ENCODE measurements at regions of chr11 and their contacts with region 1.

Region 1: GRCh38 chr11:120511116-120511819 is at the start of gene GRIK4:
- DNase-seq: peak; percentile 76 to 87
- ATAC-seq: peak; percentile 90 to 92 (median 92)
- H3K4me3 ChIP-seq: peak within 1 kb of the TSS; percentile 43
- H3K4me3 Mint-ChIP-seq: peak within 1 kb of the TSS; percentile 69
- H3K27ac ChIP-seq: no peak within 1 kb of the TSS
- H3K27ac Mint-ChIP-seq: peak within 1 kb of the TSS in 1 of 2 donors; percentile 61
- H3K4me1 ChIP-seq: peaks cover 6% of the 10 kb centered on the region
- H3K4me1 Mint-ChIP-seq: peaks cover 0 to 28% of the 10 kb centered on the region in 2 donors
- H3K27me3 ChIP-seq: no peaks in the 10 kb centered on the region
- H3K27me3 Mint-ChIP-seq: peaks cover 31 to 64% of the 10 kb centered on the region in 2 donors
- CTCF ChIP-seq: peak; percentile 87
- total RNA-seq, gene GRIK4: 2.2 to 32.3 (median 21.9) TPM

Region 2: DNA sequence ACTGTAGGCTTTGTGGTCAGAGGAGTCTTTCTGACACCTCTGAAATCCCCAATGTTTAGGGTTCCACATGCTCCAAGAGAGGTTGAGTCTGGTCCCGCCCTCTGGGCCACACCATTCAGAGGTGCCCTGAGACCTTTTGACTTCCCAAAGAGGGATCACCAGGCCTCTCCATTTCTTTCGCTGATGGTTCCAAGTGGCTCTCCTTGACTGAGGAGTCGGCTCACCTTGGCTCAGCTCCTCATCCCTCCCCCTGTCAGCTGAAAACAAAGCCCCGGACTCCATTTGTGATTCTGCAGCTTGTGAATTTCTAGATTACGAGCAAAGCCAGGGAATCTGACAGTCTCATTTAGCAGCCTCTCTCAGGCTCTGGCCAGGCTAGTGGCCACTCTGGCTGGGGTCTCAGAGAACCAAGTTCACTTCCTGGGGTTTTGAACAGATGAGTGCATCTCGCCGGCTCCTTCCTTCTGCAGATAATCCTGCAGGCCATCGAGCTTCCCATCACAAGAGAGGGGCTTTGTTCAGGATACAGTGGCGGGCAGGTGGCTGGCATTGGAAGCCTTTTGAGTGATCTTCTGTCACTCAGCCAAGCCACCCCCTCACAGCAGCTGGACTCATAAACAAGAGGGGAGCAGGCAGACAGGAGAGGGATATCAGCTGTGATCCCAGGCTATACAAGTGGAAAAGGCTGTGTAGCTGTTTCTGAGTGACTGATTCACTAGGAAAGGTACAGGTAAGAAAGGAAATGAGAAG is 476.2 kb before region 1 on chr11:
- intact Hi-C with region 1: no loop called
- DNase-seq: no peak
- ATAC-seq: no peak
- H3K4me3 ChIP-seq: no peak overlapping the region
- H3K4me3 Mint-ChIP-seq: no peak overlapping the region
- H3K27ac ChIP-seq: no peak overlapping the region
- H3K27ac Mint-ChIP-seq: no peak overlapping the region
- H3K4me1 ChIP-seq: no peaks in the 10 kb centered on the region
- H3K4me1 Mint-ChIP-seq: no peaks in the 10 kb centered on the region
- H3K27me3 ChIP-seq: no peaks in the 10 kb centered on the region
- H3K27me3 Mint-ChIP-seq: peaks cover 2 to 12% of the 10 kb centered on the region in 2 donors
- CTCF ChIP-seq: no peak

Region 3: DNA sequence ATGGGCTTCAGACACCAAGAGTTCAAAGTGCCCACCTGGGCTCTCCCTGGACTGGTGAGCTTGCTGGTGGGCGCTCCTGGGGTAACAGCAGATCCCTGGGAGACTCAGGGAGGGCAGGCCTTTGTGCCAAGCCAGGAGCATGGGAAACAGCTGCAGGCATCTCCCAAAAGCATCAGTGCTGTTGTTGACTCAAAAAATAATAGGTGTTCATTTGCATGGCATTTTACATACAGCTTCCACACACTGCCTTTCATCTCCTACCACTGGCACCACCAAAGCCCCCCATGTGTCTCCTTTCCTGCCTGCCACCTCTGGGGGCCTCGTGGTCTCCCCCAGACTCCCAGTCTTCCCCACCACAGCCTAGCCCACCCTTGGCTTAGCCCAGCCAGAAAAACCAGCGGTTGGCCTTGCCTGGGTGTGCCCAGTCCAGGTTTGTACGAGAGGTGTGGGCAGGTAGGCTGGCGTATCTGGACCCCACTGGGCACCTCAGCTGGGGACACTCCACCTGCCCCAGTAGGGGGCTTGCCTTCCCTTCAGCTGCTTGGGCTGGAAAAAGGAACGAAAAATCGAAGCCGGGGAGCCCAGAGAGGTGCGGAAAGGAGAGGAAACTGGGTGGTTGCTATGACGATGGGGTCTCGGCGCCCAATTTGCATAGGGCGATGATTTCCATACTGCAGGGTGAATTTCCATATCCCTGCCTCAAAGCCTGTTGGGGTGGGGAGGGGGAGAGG is 256.3 kb before region 1 on chr11:
- intact Hi-C with region 1: no loop called
- DNase-seq: no peak
- ATAC-seq: no peak
- H3K4me3 ChIP-seq: no peak overlapping the region
- H3K4me3 Mint-ChIP-seq: no peak overlapping the region
- H3K27ac ChIP-seq: no peak overlapping the region
- H3K27ac Mint-ChIP-seq: no peak overlapping the region
- H3K4me1 ChIP-seq: no peaks in the 10 kb centered on the region
- H3K4me1 Mint-ChIP-seq: no peaks in the 10 kb centered on the region
- H3K27me3 ChIP-seq: peaks cover 6% of the 10 kb centered on the region
- H3K27me3 Mint-ChIP-seq: peaks cover 31 to 57% of the 10 kb centered on the region in 2 donors
- CTCF ChIP-seq: no peak

Region 4: DNA sequence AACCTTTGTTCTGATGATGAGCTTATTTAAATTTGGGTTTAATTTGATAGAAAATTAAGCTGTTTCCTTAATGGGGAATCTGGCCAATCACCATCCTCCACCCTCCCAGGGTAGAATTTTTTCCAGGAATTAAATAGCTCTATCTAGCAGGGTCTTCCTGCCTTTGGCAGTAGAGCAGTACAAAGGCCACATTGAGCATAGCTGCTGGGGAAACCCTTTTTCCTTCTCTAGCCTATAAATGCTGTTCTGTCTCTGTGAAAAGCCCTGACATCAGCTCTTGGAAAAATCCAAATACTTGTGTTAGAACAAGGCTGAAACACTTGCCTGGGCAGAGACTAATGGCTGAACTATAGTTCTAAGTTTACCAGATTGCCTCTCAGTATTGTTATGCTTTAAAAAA is 120.0 kb before region 1 on chr11:
- intact Hi-C with region 1: no loop called
- DNase-seq: no peak
- ATAC-seq: no peak
- H3K4me3 ChIP-seq: no peak overlapping the region
- H3K4me3 Mint-ChIP-seq: no peak overlapping the region
- H3K27ac ChIP-seq: no peak overlapping the region
- H3K27ac Mint-ChIP-seq: no peak overlapping the region
- H3K4me1 ChIP-seq: no peaks in the 10 kb centered on the region
- H3K4me1 Mint-ChIP-seq: peaks cover 4 to 15% of the 10 kb centered on the region in 2 donors
- H3K27me3 ChIP-seq: no peaks in the 10 kb centered on the region
- H3K27me3 Mint-ChIP-seq: peaks cover 0 to 2% of the 10 kb centered on the region in 2 donors
- CTCF ChIP-seq: no peak

Region 5: GRCh38 chr11:120682866-120683265 is 171.6 kb after region 1 on chr11:
- intact Hi-C with region 1: loop called (anchors 1 kb)
- DNase-seq: no peak
- ATAC-seq: no peak
- H3K4me3 ChIP-seq: no peak overlapping the region
- H3K4me3 Mint-ChIP-seq: no peak overlapping the region
- H3K27ac ChIP-seq: no peak overlapping the region
- H3K27ac Mint-ChIP-seq: no peak overlapping the region
- H3K4me1 ChIP-seq: peaks cover 4% of the 10 kb centered on the region
- H3K4me1 Mint-ChIP-seq: peaks cover 8 to 30% of the 10 kb centered on the region in 2 donors
- H3K27me3 ChIP-seq: no peaks in the 10 kb centered on the region
- H3K27me3 Mint-ChIP-seq: no peaks in the 10 kb centered on the region
- CTCF ChIP-seq: no peak

Region 6: GRCh38 chr11:120929664-120930154 is 418.4 kb after region 1 on chr11:
- intact Hi-C with region 1: loop called (anchors 1 kb)
- DNase-seq: peak; percentile 64 to 65
- ATAC-seq: peak; percentile 82 to 92 (median 90)
- H3K4me3 ChIP-seq: no peak overlapping the region
- H3K4me3 Mint-ChIP-seq: no peak overlapping the region
- H3K27ac ChIP-seq: peak overlapping the region; percentile 27
- H3K27ac Mint-ChIP-seq: peak overlapping the region in 1 of 2 donors; percentile 80
- H3K4me1 ChIP-seq: peaks cover 11% of the 10 kb centered on the region
- H3K4me1 Mint-ChIP-seq: peaks cover 35 to 55% of the 10 kb centered on the region in 2 donors
- H3K27me3 ChIP-seq: no peaks in the 10 kb centered on the region
- H3K27me3 Mint-ChIP-seq: no peaks in the 10 kb centered on the region
- CTCF ChIP-seq: peak; percentile 70

Region 7: GRCh38 chr11:120952461-120953434 is 441.5 kb after region 1 on chr11:
- intact Hi-C with region 1: loop called (anchors 1 kb)
- DNase-seq: peak; percentile 66 to 69
- ATAC-seq: peak; percentile 65 to 87 (median 76)
- H3K4me3 ChIP-seq: peak overlapping the region; percentile 15
- H3K4me3 Mint-ChIP-seq: peak overlapping the region; percentile 92
- H3K27ac ChIP-seq: peak overlapping the region; percentile 62
- H3K27ac Mint-ChIP-seq: peak overlapping the region; percentile 29 to 93
- H3K4me1 ChIP-seq: peaks cover 32% of the 10 kb centered on the region
- H3K4me1 Mint-ChIP-seq: peaks cover 29 to 60% of the 10 kb centered on the region in 2 donors
- H3K27me3 ChIP-seq: peaks cover 2% of the 10 kb centered on the region
- H3K27me3 Mint-ChIP-seq: peaks cover 0 to 15% of the 10 kb centered on the region in 2 donors
- CTCF ChIP-seq: peak; percentile 59

Region 8: GRCh38 chr11:121112498-121113455 is 601.5 kb after region 1 on chr11:
- intact Hi-C with region 1: loop called (anchors 1 kb)
- DNase-seq: peak; percentile 21 to 48
- ATAC-seq: peak; percentile 60 to 75 (median 73)
- H3K4me3 ChIP-seq: no peak overlapping the region
- H3K4me3 Mint-ChIP-seq: no peak overlapping the region
- H3K27ac ChIP-seq: no peak overlapping the region
- H3K27ac Mint-ChIP-seq: no peak overlapping the region
- H3K4me1 ChIP-seq: no peaks in the 10 kb centered on the region
- H3K4me1 Mint-ChIP-seq: peaks cover 0 to 14% of the 10 kb centered on the region in 2 donors
- H3K27me3 ChIP-seq: no peaks in the 10 kb centered on the region
- H3K27me3 Mint-ChIP-seq: peaks cover 16 to 36% of the 10 kb centered on the region in 2 donors
- CTCF ChIP-seq: peak; percentile 59

Region 9: GRCh38 chr11:121194731-121195596 is 683.7 kb after region 1 on chr11:
- intact Hi-C with region 1: loop called (anchors 1 kb)
- DNase-seq: peak; percentile 28 to 83
- ATAC-seq: peak; percentile 86 to 92 (median 88)
- H3K4me3 ChIP-seq: no peak overlapping the region
- H3K4me3 Mint-ChIP-seq: no peak overlapping the region
- H3K27ac ChIP-seq: no peak overlapping the region
- H3K27ac Mint-ChIP-seq: no peak overlapping the region
- H3K4me1 ChIP-seq: no peaks in the 10 kb centered on the region
- H3K4me1 Mint-ChIP-seq: peaks cover 0 to 6% of the 10 kb centered on the region in 2 donors
- H3K27me3 ChIP-seq: peaks cover 6% of the 10 kb centered on the region
- H3K27me3 Mint-ChIP-seq: peaks cover 26 to 35% of the 10 kb centered on the region in 2 donors
- CTCF ChIP-seq: peak; percentile 89

Measured in natural killer cell (primary cell).